Ascending aorta (tissue), 2 donors: ENCODE measurements at regions of chr10 and their contacts with region 1.

Region 1: DNA sequence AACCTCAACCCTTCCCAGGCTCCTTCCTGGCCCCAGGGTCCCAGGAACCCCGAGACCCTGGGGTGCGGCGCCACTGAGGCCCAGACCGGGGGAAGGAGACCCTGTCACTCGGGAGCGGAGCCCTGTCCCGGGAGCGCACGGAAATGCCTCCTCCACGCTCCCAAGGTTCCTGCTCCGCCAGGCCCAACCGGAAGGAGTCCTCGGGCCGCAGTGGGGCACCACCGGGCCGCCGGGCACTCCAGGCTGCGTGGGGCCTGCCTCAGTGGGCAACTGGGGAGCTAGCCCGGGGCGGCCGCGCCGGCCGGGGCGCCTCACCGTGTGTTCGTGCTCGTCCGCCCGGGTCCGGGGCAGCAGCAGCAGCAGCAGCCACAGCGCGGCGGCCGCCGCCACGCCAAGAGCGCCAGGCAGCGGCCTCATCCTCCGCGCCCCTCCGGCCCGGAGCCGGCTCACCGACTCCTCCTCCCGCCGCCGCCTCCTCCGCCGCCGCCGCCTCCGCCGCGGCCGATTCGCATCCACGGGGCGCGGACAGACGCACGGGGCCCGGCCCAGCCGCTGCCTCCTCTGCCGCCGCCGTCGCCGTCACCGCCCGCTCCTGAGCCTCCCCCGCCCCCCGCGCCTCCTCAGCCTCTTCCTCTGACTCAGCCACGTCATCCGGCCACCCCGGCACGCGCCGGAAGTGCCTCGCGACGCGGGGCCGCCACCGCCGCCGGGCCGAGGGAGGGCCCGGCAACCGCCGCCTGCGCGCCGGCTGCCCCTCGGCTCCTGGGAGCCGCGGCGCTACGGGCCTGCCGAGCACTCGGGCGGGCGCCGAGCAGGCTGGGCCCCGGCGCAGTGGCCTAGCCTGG is at the start of gene TM9SF3:
- DNase-seq: peak; percentile 67 to 96
- H3K4me3 ChIP-seq: peak within 1 kb of the TSS; percentile 96 to 97
- H3K27ac ChIP-seq: peak within 1 kb of the TSS; percentile 97 to 98
- H3K4me1 ChIP-seq: peaks cover 3 to 44% of the 10 kb centered on the region in 2 donors
- H3K27me3 ChIP-seq: no peaks in the 10 kb centered on the region
- CTCF ChIP-seq: peak in 1 of 3 experiments; percentile 18
- total RNA-seq, gene TM9SF3: 30.4 TPM

Region 2: GRCh38 chr10:96287392-96288105 is 299.1 kb before region 1 on chr10:
- intact Hi-C with region 1: loop called (anchors 10 kb)
- DNase-seq: no peak
- H3K4me3 ChIP-seq: peak overlapping the region in 1 of 2 donors; percentile 32
- H3K27ac ChIP-seq: peak overlapping the region; percentile 74 to 81
- H3K4me1 ChIP-seq: peaks cover 4 to 10% of the 10 kb centered on the region in 2 donors
- H3K27me3 ChIP-seq: no peaks in the 10 kb centered on the region
- CTCF ChIP-seq: no peak

Region 3: DNA sequence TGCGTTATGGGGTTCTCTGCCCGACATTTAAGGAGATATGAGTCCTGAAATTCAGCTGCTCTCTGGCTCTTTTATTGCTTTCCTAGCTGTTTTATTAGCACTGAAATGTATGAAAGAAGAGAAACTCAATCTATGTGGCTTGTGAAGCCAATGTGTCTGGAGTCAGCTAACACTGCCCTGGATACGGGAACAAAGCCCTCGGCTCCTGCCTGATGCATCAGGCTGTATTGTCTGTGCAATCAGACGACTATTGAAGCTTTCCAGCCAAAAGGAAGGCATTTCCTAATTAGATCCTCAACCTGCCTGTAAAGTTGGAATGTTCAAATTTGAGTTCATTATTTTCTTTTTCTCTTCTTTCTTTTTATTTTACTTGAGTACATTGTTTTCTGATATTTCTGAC is 22.2 kb after region 1 on chr10:
- intact Hi-C with region 1: no loop called
- DNase-seq: no peak
- H3K4me3 ChIP-seq: no peak overlapping the region
- H3K27ac ChIP-seq: no peak overlapping the region
- H3K4me1 ChIP-seq: peaks cover 0 to 5% of the 10 kb centered on the region in 2 donors
- H3K27me3 ChIP-seq: no peaks in the 10 kb centered on the region
- CTCF ChIP-seq: no peak